Activated naive CD4-positive, alpha-beta T cell treated with anti-CD3 and anti-CD28 coated beads, Interleukin-2, amount 10 ng/mL, durations not matched to agents 7 days and 5 days (primary cell): ENCODE measurements at regions of chr17 and their contacts with region 1.

Region 1: DNA sequence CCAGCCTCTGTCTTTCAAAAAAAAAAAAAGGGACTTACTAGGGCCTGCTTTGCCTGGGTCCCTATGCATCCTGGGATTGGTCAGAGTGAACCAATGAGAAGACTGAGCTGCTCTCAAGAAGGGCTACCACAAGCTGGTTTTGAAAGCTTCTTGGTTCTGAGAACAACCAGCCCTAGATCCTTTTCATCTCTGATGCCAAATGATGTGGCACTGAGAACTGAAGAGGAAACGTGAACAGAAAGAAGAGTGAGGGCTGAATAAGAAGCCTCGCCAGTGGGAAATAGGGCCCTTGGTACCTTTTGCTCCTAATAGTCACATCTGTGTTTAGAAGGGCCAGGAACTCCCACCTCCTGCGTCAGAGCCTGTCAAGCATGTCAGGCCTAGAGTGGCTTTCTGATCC is 10.7 kb downstream of the TACO1 start:
- DNase-seq: peak; percentile 56
- H3K4me3 Mint-ChIP-seq: peak overlapping the region; percentile 62
- H3K27ac Mint-ChIP-seq: peak overlapping the region; percentile 99
- H3K4me1 Mint-ChIP-seq: peaks cover 34% of the 10 kb centered on the region
- H3K27me3 Mint-ChIP-seq: peaks cover 5% of the 10 kb centered on the region

Region 2: GRCh38 chr17:63325808-63326207 is 285.5 kb before region 1 on chr17:
- CTCF ChIA-PET with region 1: no interaction called
- DNase-seq: no peak
- H3K4me3 Mint-ChIP-seq: no peak overlapping the region
- H3K27ac Mint-ChIP-seq: no peak overlapping the region
- H3K4me1 Mint-ChIP-seq: no peaks in the 10 kb centered on the region
- H3K27me3 Mint-ChIP-seq: no peaks in the 10 kb centered on the region

Region 3: GRCh38 chr17:63425482-63425881 is 185.9 kb before region 1 on chr17:
- CTCF ChIA-PET with region 1: interaction called, 273 read pairs
- DNase-seq: peak; percentile 82
- H3K4me3 Mint-ChIP-seq: no peak overlapping the region
- H3K27ac Mint-ChIP-seq: no peak overlapping the region
- H3K4me1 Mint-ChIP-seq: peaks cover 59% of the 10 kb centered on the region
- H3K27me3 Mint-ChIP-seq: peaks cover 34% of the 10 kb centered on the region

Region 4: DNA sequence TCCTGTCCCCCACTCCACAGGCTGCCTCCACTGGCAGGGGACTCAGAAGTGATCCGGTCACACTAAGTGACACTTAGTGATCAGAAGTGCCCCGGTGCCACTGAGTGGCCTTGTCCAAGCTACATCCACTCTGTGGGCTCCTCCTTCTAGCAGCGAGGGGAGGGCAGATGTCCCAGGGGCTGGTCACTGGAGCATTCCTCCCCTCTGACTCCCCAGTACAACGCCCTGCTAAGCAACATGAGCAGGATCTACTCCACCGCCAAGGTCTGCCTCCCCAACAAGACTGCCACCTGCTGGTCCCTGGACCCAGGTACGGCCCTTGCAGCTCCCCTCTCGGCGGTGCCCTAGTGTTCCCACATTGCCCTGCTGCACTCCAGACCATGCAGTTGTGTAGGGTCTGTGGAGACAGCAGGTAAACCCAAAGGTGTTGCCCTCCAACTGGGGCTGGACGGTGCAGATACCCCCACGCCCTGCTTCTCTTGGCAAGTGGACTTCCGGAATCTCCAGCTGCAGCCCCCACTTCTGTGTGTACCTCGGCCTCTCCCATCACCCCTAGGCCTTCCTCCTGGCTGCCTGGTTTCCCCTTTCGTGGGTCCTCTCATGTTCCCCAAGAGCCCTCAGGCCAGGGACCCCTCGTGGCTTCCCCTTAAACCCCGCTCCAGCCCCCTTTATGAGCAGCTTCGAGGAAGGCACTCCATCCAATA is 132.4 kb before region 1 on chr17:
- CTCF ChIA-PET with region 1: interaction called, 32 read pairs
- DNase-seq: peak; percentile 88
- H3K4me3 Mint-ChIP-seq: peak overlapping the region; percentile 17
- H3K27ac Mint-ChIP-seq: peak overlapping the region; percentile 21
- H3K4me1 Mint-ChIP-seq: peaks cover 18% of the 10 kb centered on the region
- H3K27me3 Mint-ChIP-seq: peaks cover 81% of the 10 kb centered on the region

Region 5: DNA sequence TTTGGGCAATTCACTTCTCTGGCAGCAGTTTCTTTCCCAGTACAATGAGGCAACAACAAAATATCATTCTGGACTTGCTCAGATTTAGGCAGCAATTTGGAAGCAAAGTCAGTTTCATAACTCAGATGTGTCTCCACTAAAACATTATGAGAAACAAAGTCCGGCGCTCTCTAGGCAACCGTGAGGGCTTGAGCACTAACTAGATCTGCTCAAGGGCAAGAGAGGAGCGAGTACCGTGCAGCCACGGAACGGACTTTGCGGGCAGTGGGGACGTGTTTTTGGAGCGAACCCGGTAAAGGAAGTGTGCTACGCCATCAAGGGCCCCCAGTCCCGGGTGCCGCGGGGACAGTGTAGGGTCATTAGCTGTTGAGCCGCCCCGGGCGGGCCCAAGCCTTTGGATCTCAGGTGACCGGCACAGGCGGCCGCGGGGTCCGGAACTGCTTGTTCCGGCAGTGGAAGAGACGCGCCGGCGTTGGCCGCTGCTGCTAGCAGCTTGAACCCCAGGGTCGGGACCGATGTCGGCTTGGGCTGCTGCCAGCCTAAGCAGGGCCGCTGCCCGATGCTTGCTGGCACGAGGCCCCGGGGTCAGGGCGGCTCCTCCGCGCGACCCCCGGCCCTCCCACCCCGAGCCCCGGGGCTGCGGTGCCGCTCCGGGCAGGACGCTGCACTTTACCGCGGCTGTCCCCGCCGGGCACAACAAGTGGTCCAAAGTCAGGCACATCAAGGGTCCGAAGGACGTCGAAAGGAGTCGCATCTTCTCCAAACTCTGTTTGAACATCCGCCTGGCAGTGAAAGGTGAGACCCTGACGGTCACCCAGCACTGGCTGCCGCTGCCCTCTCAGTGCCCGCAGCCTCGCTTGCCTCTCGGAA is 10.6 kb before region 1 on chr17 and contains the start of gene TACO1:
- CTCF ChIA-PET with region 1: interaction called, 24 read pairs
- DNase-seq: peak; percentile 83
- H3K4me3 Mint-ChIP-seq: peak within 1 kb of the TSS; percentile 88
- H3K27ac Mint-ChIP-seq: peak within 1 kb of the TSS; percentile 93
- H3K4me1 Mint-ChIP-seq: peaks cover 46% of the 10 kb centered on the region
- H3K27me3 Mint-ChIP-seq: no peaks in the 10 kb centered on the region

Region 6: GRCh38 chr17:63707151-63707550 is 95.8 kb after region 1 on chr17:
- CTCF ChIA-PET with region 1: interaction called, 18 read pairs
- DNase-seq: no peak
- H3K4me3 Mint-ChIP-seq: peak overlapping the region; percentile 38
- H3K27ac Mint-ChIP-seq: peak overlapping the region; percentile 83
- H3K4me1 Mint-ChIP-seq: peaks cover 81% of the 10 kb centered on the region
- H3K27me3 Mint-ChIP-seq: no peaks in the 10 kb centered on the region